Left cardiac atrium (tissue), 4 donors: ENCODE measurements at regions of chr2 and their contacts with region 1.

Region 1: DNA sequence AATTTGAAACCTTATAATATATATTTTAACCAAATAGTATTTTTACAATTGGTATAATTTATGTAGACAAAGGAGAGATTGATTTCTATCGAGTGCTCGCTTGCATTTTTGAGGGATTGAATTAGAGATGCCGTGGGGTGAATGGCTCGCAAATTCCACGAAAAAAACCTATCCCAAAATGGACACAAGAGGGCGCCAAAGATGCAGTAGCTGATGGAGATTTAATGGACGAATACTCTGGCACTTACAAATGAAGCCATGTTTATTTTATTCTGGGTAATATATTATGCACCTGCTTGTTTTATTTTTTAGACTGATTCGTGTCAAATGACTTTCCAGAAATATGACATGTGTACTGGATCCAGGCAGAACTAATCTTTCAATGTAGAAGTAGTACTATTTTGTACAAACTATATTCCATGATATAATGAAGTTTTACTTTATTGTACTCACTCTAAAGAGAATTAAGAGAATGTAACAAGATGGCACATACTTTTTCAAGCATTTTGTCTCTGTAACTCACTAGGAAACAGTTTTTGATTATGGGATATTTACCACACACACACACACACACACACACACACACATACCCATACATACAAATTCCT is 505.4 kb downstream of the PLCL1 start:
- DNase-seq: no peak
- ATAC-seq: peak in 1 of 2 donors; percentile 23

Region 2: DNA sequence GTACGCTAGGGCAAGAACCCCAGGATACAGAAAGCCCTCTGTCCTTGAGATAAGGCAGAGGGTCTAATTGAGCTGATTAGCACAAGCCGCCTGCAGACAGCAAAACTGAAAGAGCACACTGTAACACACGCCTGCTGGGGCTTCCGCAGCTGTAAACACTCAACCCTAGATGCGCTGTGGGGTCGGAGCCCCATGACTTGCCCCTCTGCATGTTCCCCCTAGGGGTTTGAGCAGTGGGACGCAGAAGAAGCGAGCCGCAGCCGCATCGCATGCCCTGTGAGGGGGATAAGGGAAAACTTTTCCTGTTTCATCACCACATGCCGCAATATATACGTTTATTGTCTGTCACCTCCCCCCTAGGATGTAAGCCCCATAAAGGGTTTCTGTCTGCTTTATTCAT is 120.8 kb before region 1 on chr2:
- intact Hi-C with region 1: no loop called
- DNase-seq: no peak
- ATAC-seq: no peak

Region 3: GRCh38 chr2:198214114-198214596 is 95.6 kb before region 1 on chr2:
- intact Hi-C with region 1: no loop called
- DNase-seq: no peak
- ATAC-seq: no peak

Region 4: GRCh38 chr2:198362740-198363139 is 53.0 kb after region 1 on chr2:
- intact Hi-C with region 1: no loop called
- DNase-seq: no peak
- ATAC-seq: no peak

Region 5: GRCh38 chr2:199488772-199489400 is 1179.1 kb after region 1 on chr2:
- intact Hi-C with region 1: loop called in 1 of 2 experiments (anchors 5 kb)
- DNase-seq: no peak
- ATAC-seq: peak in 1 of 2 donors; percentile 41

Region 6: GRCh38 chr2:199739413-199740110 is 1429.8 kb after region 1 on chr2:
- intact Hi-C with region 1: loop called in 1 of 2 experiments (anchors 2 kb)
- DNase-seq: peak; percentile 55
- ATAC-seq: peak; percentile 62 to 63